Breast epithelium (tissue), 4 donors: ENCODE measurements at regions of chr20 and their contacts with region 1.

Region 1: DNA sequence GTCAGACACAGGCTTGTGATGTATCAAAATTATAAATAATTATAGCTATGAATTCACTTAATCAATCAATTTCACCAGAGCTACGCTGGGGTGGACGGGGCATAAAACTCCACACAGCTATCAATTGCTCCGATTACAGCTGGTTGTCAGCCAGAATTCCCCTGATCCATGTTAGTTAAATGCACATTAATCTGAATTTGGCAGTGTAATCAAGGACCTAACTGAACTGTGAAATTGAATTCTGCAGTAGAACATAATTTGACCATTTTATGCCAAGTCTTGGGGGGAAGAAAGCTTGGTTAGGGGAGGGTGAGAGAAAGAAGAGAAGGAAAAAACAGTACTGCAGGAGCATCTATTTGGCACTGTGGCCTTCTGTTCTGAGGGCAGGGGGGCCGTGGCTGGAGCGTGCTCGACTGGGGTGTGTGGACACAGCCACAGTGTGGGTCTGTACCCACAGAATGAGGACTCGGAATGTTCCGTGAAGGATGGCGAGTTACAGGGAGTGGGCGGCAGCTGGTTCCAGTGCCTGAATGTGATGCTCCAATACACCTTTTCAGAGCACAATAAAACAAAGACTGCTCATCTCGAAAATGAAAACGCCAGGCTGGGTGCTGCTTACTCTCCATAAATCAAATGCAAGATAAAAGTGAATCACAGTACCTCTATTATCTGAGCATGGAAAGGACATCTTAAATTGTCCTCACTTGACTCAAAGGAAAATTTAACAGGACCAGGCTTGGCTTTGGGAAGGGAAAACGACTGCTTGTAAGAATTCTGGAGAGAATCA is 59.1 kb downstream of the LAMP5 start:
- DNase-seq: no peak
- H3K4me3 ChIP-seq: no peak overlapping the region
- H3K27ac ChIP-seq: no peak overlapping the region
- H3K4me1 ChIP-seq: no peaks in the 10 kb centered on the region
- H3K27me3 ChIP-seq: no peaks in the 10 kb centered on the region
- CTCF ChIP-seq: no peak
- POLR2A ChIP-seq: no peak

Region 2: GRCh38 chr20:9877932-9878495 is 304.5 kb after region 1 on chr20:
- intact Hi-C with region 1: loop called (anchors 5 kb)
- DNase-seq: no peak
- H3K4me3 ChIP-seq: no peak overlapping the region
- H3K27ac ChIP-seq: no peak overlapping the region
- H3K4me1 ChIP-seq: no peaks in the 10 kb centered on the region
- H3K27me3 ChIP-seq: no peaks in the 10 kb centered on the region
- CTCF ChIP-seq: no peak
- POLR2A ChIP-seq: no peak